ENCODE measurements at regions of chr9 and their contacts with region 1.

Region 1: DNA sequence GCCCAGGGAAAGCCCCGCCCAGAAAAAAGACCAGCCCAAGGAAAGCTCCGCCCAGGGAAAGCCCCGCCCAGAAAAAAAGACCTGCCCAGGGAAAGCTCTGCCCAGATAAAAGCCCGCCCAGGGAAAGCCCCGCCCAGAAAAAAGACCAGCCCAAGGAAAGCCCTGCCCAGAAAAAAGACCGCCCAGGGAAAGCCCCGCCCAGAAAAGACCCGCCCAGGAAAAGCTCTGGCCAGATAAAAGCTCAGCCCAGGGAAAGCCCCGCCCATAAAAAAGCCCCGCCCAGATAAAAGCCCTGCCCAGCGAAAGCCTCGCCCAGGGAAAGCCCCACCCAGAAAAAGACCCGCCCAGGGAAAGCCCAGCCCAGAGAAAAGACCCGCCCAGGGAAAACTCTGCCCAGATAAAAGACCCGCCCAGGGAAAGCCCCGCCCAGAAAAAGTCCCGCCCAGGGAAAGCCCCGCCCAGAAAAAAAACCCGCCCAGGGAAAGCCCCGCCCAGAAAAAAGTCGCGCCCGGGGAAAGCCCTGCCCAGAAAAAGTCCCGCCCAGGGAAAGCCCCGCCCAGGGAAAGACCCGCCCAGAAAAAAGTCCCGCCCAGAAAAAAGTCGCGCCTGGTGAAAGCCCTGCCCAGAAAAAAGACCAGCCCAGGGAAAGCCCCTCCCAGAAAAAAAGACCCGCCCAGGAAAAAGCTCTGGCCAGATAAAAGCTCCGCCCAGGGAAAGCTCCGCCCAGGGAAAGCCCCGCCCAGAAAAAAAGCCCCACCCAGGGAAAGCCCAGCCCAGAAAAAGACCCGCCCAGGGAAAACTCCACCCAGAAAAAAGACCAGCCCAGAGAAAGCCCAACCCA is 11.9 kb downstream of the GRIN1 start:
- DNase-seq: peak; percentile 84
- ATAC-seq: peak; percentile 19
- H3K4me3 ChIP-seq: no peak overlapping the region
- H3K27ac ChIP-seq: no peak overlapping the region
- H3K4me1 ChIP-seq: peaks cover 30% of the 10 kb centered on the region
- H3K27me3 ChIP-seq: peaks cover 8 to 38% of the 10 kb centered on the region in 2 experiments; a peak in 4 of 5 replicates
- CTCF ChIP-seq: no peak
- EP300 ChIP-seq: no peak
- POLR2A ChIP-seq: no peak
- RAD21 ChIP-seq: no peak

Region 2: DNA sequence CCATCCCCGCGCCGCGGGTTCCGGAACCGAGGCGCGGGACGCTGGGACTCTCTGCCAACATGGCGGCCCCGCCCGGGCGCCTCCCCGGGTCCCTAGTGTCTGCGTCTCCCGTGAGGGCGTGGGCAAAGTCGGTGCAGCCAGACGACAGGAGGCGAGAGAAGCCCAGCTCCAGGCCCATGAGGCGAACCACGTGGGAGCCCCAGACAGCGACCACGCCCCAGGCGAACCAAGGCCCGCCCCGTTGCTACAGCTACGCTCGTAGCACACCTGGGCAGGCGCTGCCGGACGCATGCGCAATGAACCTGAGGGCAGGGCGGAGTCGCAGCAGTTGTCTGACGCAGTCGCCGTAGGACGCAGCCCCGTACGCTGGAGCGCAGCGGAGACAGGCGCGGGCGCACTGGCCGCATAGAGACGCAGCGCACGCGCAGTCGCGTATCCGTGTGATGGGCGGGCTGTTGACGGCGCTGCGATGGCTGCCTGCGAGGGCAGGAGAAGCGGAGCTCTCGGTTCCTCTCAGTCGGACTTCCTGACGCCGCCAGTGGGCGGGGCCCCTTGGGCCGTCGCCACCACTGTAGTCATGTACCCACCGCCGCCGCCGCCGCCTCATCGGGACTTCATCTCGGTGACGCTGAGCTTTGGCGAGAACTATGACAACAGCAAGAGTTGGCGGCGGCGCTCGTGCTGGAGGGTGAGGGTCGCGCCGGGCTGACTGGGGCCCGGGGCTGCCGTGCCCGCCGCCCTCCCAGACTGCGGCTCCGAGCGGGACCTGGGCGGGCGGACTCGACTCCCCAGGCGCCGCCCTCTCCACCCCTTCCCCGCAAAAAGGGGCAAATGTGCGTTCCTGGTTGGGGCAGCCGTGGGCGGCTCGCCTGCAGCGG is 64.1 kb before region 1 on chr9 and contains the start of gene MAN1B1:
- CTCF ChIA-PET with region 1: no interaction called
- POLR2A ChIA-PET with region 1: interaction called, 14 read pairs
- in situ Hi-C with region 1: no loop called
- intact Hi-C with region 1: no loop called
- DNase-seq: peak; percentile 97
- ATAC-seq: peak; percentile 87
- H3K4me3 ChIP-seq: peak within 1 kb of the TSS; percentile 77 to 89 (median 79)
- H3K27ac ChIP-seq: peak within 1 kb of the TSS; percentile 83
- H3K4me1 ChIP-seq: peaks cover 59% of the 10 kb centered on the region
- H3K27me3 ChIP-seq: no peaks in the 10 kb centered on the region; a peak in 1 of 5 replicates
- CTCF ChIP-seq: peak; percentile 45
- EP300 ChIP-seq: no peak
- POLR2A ChIP-seq: peak in 1 of 2 experiments; percentile 65; a peak in 2 of 4 replicates
- RAD21 ChIP-seq: peak; percentile 53; the same call in 1 of the 2 replicates
- total RNA-seq, gene MAN1B1: 19.0 and 48.9 TPM in 2 replicates

Region 3: DNA sequence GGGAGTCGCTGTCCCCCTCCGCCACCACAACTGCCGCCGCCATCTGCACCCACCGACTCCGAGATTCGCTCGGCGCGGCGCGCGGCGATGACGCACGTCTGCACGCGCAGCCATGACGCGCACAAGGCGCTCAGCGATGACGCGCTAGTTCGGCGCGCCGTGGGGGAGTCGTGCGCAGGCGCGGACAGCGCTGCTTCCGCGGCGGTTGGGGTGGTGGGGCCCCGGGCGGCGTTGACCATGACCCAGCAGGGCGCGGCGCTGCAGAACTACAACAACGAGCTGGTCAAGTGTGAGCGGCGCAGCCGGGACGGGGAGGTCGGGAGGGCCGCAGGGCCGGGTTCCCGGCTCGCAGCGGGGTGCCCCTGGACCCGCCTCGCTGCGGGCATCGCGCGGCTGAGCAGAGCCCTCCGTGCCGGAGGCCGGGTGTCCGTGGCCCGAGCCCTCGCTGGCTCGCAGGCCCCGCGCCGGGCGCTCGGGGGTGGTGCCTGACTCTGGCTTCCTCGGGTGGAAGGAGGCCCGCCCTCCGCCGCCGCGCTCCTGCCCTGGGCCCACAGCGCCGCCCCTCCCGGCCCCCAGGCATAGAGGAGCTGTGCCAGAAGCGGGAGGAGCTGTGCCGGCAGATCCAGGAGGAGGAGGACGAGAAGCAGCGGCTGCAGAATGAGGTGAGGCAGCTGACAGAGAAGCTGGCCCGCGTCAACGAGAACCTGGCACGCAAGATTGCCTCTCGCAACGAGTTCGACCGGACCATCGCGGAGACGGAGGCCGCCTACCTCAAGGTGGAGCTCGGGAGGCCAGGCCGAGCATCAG is 37.9 kb after region 1 on chr9 and contains the starts of genes ANAPC2 and SSNA1:
- CTCF ChIA-PET with region 1: no interaction called
- POLR2A ChIA-PET with region 1: interaction called, 25 read pairs
- in situ Hi-C with region 1: no loop called
- intact Hi-C with region 1: loop called (anchors 1 kb)
- DNase-seq: peak; percentile 85
- ATAC-seq: peak; percentile 84
- H3K4me3 ChIP-seq: peak within 1 kb of the TSS; percentile 84 to 99 (median 97)
- H3K27ac ChIP-seq: peak within 1 kb of the TSS; percentile 81
- H3K4me1 ChIP-seq: peaks cover 28% of the 10 kb centered on the region
- H3K27me3 ChIP-seq: no peaks in the 10 kb centered on the region
- CTCF ChIP-seq: peak; percentile 88
- EP300 ChIP-seq: peak in 1 of 2 experiments; percentile 18; a peak in 1 of 4 replicates
- POLR2A ChIP-seq: peak in 1 of 2 experiments; percentile 41; a peak in 1 of 4 replicates
- RAD21 ChIP-seq: peak; percentile 92
- total RNA-seq, gene ANAPC2: 7.4 and 12.3 TPM in 2 replicates
- total RNA-seq, gene SSNA1: 41.2 and 49.4 TPM in 2 replicates

Region 4: DNA sequence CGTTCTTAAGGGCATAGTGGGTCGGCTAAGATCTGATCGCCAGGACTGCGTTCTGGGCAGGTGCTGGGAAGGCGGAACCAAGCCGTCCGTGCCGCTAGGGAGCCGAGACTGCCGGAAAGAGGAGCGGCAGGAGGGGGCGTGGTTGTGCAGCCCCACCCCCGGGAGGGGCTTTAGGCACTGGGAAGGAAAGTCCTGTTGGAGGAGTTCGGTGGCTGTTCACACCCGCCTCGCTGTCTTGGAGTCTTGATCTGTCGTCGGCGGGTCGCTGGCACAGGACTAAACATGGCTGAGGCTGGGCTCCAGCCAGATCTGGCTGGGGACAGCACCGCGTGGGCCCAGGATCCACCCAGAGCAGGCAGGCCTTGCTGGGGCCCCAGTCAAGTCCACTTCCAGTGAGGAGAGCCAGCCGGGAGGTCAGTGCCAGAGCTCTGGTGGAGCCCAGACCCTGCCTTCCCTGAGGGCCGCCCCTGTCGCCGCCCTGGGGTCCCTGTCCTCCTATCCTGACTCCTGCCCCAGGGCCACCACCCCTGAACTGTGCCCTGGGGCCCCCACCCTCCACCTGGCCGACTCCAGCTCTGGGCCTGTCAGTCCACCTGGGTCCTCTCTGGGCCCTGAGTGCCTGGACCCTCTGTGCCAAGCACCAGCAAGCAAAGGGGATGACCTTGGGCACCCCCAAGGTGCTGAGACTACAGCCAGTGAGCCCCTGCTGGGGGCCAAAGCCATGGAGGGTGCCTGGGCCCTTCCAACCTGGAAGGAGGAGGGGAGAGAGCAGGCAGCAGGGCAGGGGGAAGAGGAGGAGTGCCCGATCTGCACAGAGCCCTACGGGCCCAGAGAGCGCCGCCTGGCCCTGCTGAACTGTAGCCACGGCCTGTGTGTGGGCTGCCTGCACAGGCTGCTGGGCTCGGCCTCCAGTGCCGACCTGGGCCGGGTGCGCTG is 66.7 kb after region 1 on chr9:
- CTCF ChIA-PET with region 1: no interaction called
- POLR2A ChIA-PET with region 1: interaction called, 23 read pairs
- in situ Hi-C with region 1: no loop called
- intact Hi-C with region 1: no loop called
- DNase-seq: peak; percentile 66
- ATAC-seq: peak; percentile 69
- H3K4me3 ChIP-seq: peak overlapping the region; percentile 68 to 83 (median 77)
- H3K27ac ChIP-seq: peak overlapping the region; percentile 84
- H3K4me1 ChIP-seq: peaks cover 29% of the 10 kb centered on the region
- H3K27me3 ChIP-seq: no peaks in the 10 kb centered on the region
- CTCF ChIP-seq: peak; percentile 50
- EP300 ChIP-seq: no peak
- POLR2A ChIP-seq: no peak; a peak in 1 of 4 replicates
- RAD21 ChIP-seq: 0 out of 2 replicates have a peak, but pooled peaks have one; percentile 11